Posterior cingulate gyrus (tissue), 11 donors: ENCODE measurements at regions of chr1 and their contacts with region 1.

Region 1: DNA sequence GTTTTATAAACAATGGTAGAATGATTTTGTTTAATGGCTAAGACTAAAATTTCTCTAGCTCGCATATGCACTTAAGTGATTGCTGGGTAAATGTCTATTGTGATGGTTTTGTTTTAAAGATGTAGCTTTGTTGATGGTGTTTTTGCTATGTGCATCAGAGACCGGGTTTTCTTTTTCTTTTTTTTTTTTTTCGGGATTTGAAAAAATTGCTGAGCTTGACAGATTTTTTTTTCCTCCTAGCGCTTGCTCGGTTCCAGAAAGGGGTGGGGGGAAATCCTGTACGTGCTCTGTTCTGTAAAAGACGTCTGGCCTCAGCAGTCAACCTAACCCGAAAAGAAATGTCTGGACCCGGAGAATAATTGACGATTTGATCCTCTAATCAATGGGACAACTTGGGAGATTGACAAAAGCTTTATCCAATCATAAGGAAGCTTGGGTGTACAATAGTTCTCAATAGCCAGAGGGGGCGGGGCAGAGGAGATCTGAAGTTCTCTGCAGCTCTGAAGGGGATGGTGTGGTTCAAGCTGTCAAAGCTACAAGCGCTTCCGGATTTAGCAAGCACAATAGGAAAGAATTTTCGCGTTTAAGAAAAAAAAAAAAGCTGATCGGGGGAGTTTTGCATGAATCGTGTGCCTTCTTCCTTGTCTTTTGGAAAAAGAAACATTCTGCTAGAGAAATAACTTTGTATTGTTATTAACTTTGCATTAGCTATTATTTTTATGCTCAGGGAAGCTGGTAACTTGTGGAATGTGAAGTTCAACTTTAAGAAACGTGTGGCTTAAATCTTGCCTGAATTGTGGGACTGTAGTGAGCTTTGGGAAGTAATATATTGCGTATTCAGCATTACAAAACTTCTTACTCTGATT is 4.5 kb upstream of the NFIA start:
- DNase-seq: peak; percentile 57 to 96 (median 78)

Region 2: DNA sequence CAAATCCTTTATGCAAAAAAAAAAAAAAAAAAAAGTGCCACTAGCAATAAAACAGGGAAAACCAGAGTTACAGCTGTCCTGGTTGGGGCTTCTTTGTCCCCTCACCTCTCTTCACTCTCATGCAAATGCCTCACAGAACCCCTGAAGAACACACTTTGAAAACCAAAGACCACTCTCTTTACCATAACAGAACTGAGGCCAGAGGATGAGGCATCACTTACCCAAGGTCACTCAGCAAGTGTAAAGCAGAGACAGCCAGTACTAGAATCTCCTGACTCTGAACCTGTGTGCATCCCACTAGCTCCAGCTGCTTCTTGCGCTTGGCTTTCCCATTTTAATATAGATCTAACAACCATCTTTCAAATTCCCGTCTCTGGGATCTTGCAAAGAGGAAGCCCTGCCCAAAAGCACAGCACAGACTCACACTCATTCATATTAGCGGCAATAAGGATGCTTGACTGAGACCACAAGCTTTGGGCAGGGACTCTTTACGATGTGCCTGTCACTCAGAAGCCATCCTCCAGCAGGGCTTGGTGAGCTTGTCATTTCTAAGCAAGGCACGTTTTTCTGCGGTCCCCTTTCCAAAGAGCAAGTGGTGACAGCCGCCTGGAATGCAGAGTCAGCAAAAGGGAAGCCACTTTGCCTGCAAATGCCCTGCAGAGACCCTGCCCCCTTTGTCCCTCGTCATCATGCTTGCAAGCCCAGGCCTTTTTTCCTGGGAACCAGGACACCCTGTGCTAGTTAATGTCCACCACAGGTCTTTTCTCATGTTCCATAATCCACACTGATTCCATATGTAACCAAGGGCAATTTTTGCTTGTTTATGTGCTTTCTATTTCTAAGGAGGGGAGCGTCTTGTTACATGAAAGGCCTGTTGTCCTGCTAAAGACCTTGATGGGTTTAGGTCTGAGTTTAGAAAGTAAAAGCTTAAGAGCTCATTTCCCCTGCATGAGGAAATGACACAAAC is 72.0 kb before region 1 on chr1:
- intact Hi-C with region 1: no loop called
- DNase-seq: peak in 3 of 10 donors; percentile 11 to 71 (median 11)

Region 3: GRCh38 chr1:61056573-61057439 is 21.1 kb before region 1 on chr1:
- intact Hi-C with region 1: loop called (anchors 2 kb)
- DNase-seq: peak in 9 of 10 donors; percentile 46 to 92 (median 62)

Region 4: GRCh38 chr1:61270761-61271411 is 193.0 kb after region 1 on chr1:
- intact Hi-C with region 1: loop called (anchors 5 kb)
- DNase-seq: no peak